Right ventricle myocardium inferior (tissue), 1 donor: ENCODE measurements at regions of chr7 and their contacts with region 1.

Region 1: DNA sequence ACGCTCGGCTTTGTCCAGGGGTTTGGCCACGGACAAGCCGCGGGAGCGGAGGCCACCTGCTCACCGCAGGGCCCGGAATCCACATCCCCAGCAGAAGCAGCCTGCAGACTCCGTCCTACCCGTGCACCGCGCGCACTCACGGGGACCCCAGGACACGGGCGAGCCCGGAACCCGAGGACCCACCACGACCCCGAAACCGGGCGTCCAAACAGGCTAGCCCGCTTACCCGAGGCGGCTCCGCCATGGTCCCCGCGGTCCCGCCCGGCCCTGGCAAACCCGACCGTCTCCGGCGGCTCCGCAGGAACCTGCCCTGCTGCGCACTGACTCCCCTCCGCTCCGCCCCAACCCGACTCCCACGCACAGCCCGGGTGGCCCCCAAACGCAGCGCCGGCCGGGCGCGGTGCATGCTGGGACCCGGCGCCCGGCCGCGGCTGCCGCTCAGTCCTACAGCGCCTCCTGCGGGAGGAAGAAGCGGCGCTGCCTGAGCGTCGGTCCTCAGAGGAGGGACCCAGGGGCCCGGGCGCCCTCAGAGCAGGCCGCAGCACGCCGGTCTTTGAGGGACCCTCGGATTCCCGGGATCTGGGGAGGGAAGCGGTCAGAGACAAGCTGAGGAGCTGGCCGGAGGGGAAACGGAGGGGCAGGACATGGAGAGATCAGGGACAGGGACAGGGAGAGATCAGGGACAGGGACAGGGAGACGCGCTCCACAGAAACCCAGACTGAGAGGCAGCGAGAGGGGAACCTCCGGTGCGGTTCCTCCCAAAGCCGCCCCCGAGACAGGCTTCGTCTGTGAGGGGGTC is at the start of gene ZNF786:
- DNase-seq: peak; percentile 93
- ATAC-seq: peak; percentile 97
- total RNA-seq, gene ZNF786: 2.9 TPM

Region 2: GRCh38 chr7:149005241-149006050 is 85.2 kb before region 1 on chr7:
- intact Hi-C with region 1: loop called (anchors 1 kb)
- DNase-seq: peak; percentile 92
- ATAC-seq: peak; percentile 83

Region 3: GRCh38 chr7:149125863-149126661 is 35.5 kb after region 1 on chr7 and contains the start of gene ZNF425:
- intact Hi-C with region 1: loop called (anchors 2 kb)
- DNase-seq: peak; percentile 96
- ATAC-seq: peak; percentile 97
- total RNA-seq, gene ZNF425: 0.60 TPM

Region 4: DNA sequence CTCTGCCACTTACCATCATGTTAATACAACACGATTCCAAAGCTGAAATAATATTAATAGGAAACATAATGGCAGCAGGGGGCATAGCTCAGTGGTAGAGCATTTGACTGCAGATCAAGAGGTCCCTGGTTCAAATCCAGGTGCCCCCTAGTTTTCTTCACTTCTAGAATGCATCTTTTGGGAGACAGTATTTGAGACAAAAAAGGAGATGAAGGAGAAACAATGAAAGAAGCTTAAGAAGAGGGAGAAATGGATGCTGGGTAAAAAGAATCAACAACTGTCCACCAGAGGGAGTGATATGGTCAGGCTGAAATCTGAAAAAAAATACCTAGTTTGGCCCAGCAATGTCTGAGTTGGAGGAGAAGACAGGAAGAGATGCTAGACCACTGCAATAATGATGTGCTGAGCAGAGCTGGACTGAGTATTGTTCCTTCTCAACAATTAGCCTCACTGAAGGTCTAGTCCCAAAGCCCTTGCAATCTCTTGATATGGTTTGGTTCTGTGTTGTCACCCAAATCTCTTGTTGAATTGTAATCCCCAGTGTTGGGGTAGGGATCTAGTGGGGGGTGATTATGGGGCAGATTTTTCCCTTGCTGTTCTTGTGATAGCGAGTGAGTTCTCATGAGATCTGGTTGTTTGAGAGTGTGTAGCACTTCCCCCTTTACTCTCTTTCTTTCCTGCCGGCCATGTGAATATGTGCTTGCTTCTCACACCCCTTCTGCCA is 219.7 kb after region 1 on chr7:
- intact Hi-C with region 1: no loop called
- DNase-seq: no peak
- ATAC-seq: peak; percentile 37